Caco-2 (cell line): ENCODE measurements at regions of chr20 and their contacts with region 1.

Region 1: GRCh38 chr20:49936153-49937027 is at the start of gene RNF114:
- DNase-seq: peak; percentile 94 to 98
- H3K4me3 ChIP-seq: peak within 1 kb of the TSS; percentile 87
- H3K4me3 Mint-ChIP-seq: peak within 1 kb of the TSS; percentile 93
- H3K27ac Mint-ChIP-seq: peak within 1 kb of the TSS; percentile 91
- H3K4me1 ChIP-seq: peaks cover 32% of the 10 kb centered on the region
- H3K4me1 Mint-ChIP-seq: peaks cover 38% of the 10 kb centered on the region
- H3K27me3 ChIP-seq: no peaks in the 10 kb centered on the region
- H3K27me3 Mint-ChIP-seq: no peaks in the 10 kb centered on the region
- CTCF ChIP-seq: peak in 1 of 2 experiments; percentile 11
- total RNA-seq, gene RNF114: 146 and 154 TPM in 2 replicates

Region 2: GRCh38 chr20:50061742-50062516 is 125.5 kb after region 1 on chr20:
- CTCF ChIA-PET with region 1: no interaction called
- POLR2A ChIA-PET with region 1: no interaction called
- intact Hi-C with region 1: no loop called
- DNase-seq: no peak
- H3K4me3 ChIP-seq: no peak overlapping the region
- H3K4me3 Mint-ChIP-seq: no peak overlapping the region
- H3K27ac Mint-ChIP-seq: no peak overlapping the region
- H3K4me1 ChIP-seq: no peaks in the 10 kb centered on the region
- H3K4me1 Mint-ChIP-seq: peaks cover 6% of the 10 kb centered on the region
- H3K27me3 ChIP-seq: no peaks in the 10 kb centered on the region
- H3K27me3 Mint-ChIP-seq: no peaks in the 10 kb centered on the region
- CTCF ChIP-seq: no peak

Region 3: GRCh38 chr20:50077818-50078604 is 141.6 kb after region 1 on chr20:
- CTCF ChIA-PET with region 1: no interaction called
- POLR2A ChIA-PET with region 1: no interaction called
- intact Hi-C with region 1: no loop called
- DNase-seq: peak in 1 of 2 experiments; percentile 45
- H3K4me3 ChIP-seq: no peak overlapping the region
- H3K4me3 Mint-ChIP-seq: no peak overlapping the region
- H3K27ac Mint-ChIP-seq: no peak overlapping the region
- H3K4me1 ChIP-seq: peaks cover 19% of the 10 kb centered on the region
- H3K4me1 Mint-ChIP-seq: peaks cover 17% of the 10 kb centered on the region
- H3K27me3 ChIP-seq: no peaks in the 10 kb centered on the region
- H3K27me3 Mint-ChIP-seq: no peaks in the 10 kb centered on the region
- CTCF ChIP-seq: no peak

Region 4: DNA sequence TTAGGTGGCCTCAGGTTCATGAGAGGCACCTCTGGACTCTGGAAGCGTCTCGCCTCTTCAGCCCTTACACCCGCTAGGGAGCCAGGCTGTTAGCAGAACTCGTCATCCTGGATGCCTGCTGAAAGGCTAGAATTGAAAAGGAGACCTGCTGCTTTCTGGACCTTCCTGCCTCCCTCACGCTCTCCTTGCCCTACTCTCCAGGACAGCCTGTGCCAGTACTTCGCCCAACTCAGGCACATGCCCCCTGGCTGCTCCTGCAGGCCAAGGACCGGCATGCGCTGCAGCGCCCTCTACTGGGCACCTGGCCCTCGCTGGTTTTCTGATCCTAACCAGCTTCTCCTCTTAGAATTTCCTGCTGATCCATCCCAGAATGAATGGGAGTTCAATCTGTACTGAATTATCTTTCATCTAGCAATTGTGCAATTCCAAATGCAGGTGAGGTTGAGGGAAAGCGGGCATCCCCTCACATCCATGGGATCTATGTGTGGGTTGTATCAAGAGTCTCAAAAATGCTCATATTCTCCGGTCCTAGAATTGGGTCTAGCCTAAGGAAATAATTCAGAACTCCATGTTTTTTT is 651.7 kb after region 1 on chr20:
- CTCF ChIA-PET with region 1: interaction called, 10 read pairs
- POLR2A ChIA-PET with region 1: no interaction called
- intact Hi-C with region 1: no loop called
- DNase-seq: peak; percentile 87 to 94
- H3K4me3 ChIP-seq: no peak overlapping the region
- H3K4me3 Mint-ChIP-seq: no peak overlapping the region
- H3K27ac Mint-ChIP-seq: no peak overlapping the region
- H3K4me1 ChIP-seq: peaks cover 9% of the 10 kb centered on the region; the same call in 1 of the 2 replicates
- H3K4me1 Mint-ChIP-seq: no peaks in the 10 kb centered on the region
- H3K27me3 ChIP-seq: no peaks in the 10 kb centered on the region
- H3K27me3 Mint-ChIP-seq: no peaks in the 10 kb centered on the region
- CTCF ChIP-seq: peak; percentile 99 to 100